G401 (cell line): ENCODE measurements at regions of chr15 and their contacts with region 1.

Region 1: DNA sequence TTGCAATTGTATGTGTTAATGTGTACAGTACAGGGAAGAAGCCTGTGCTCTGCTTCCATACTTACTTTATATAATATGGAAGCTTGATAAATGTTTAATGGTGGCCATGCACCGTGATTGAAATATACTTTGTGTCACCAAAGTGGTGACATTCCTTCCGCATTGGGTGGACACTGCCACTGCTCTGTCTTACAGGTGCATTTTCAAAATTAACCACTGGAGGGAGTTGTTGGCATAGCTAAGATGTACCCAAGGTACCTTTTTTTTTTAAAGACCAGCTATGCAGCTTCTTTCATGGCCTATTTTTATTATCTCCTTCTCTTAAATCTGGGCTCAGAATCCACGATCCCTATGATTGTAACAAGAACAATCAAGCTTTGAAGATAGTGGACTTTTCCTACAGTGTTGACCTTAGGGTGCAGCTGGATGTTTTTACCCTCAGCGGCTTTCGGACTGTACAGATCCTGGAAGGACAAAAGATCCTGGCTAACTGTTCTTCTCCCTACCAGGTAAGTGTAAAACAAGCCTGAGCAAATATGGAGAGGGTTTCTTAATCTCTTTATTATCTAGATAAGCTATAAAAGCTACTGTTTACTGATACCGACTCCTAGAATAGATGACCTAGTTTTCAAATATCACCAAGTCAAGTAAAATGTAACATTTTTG is 21.6 kb upstream of the PAK6 start:
- DNase-seq: peak; percentile 91

Region 2: DNA sequence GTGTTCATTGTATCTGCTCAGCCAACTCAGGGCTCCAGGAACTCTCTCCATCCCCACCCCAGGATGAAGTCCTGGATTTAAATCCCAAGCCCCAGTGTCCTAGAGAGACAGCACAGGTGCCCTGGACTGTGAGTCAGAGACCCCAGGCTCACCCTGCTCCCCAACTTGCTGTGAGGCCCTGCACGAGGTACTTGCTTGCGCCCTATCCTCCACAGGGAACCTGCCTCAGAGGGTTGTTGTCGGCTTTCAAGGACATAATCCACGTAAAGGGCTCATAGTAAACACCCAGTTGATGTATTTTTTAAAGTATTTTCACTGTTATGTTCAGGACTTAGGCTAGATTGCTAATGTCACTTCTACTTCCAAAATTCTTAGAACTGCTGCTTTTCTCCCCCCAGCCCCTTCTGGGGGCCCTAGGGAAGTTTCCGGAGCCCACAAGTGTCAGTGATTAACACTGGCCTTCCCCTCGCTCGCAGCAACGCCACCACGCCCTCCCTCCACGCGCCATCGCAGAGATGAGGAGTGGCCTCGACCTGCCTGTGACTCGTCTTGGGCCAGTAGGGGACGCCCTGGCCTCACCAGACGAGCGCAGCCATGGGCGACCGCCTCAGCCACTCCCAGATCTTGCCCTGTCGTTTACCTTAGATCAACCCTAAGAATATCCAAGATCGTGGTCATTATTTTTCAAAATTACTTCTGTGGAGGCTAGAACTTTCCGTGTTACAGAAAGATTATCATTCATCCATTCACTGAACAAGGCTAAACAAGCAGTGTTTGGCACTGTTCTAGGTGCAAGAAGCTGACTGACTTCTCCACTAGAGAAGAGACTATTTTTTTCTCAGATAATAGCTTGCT is 172.3 kb before region 1 on chr15:
- in situ Hi-C with region 1: loop called (anchors 25 kb)
- DNase-seq: peak; percentile 78

Region 3: GRCh38 chr15:40274350-40275274 is 57.3 kb after region 1 on chr15:
- in situ Hi-C with region 1: loop called (anchors 5 kb)
- DNase-seq: peak; percentile 83